Heart right ventricle (tissue), 16 donors: ENCODE measurements at regions of chr4 and their contacts with region 1.

Region 1: GRCh38 chr4:94304365-94304971 is 38.2 kb downstream of the HPGDS start:
- DNase-seq: no peak
- ATAC-seq: peak in 3 of 8 donors; percentile 41 to 59 (median 55)
- H3K4me3 ChIP-seq: no peak overlapping the region
- H3K27ac ChIP-seq: no peak overlapping the region
- H3K4me1 ChIP-seq: peaks cover 0 to 32% (median 6%) of the 10 kb centered on the region in 9 donors
- H3K27me3 ChIP-seq: no peaks in the 10 kb centered on the region
- CTCF ChIP-seq: peak in 8 of 9 donors; percentile 22 to 73 (median 64)

Region 2: DNA sequence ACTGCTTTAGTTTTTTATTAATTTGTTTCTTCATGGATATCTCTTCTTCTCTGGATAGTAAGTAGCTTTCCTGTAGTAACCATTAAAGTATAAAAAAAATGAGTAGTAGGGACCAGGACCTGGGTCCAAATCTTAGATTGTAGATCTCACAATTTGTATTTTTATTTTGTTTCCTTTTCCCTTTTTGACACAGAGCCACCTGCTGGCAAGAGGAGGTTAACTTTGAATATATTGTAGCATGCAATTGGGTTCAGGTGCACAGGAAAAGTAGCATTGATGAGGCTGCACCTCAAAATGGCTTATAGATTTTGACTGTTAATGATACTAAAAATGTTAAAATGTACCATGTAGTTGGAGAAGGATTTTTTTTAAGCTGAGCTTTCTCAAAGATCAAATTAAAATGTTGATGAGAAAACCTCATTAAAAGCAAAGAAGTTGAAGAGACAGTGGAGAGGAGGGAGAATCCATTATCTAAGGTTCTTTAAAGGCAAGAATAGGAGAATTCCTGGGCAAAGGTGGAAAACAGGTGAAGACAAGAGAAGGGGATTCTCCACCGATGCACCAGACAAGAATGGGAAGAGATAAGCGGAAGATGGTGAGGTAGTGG is 86.4 kb after region 1 on chr4:
- intact Hi-C with region 1: loop called in 2 of 10 experiments (anchors 5 to 10 kb)
- DNase-seq: no peak
- ATAC-seq: no peak
- H3K4me3 ChIP-seq: no peak overlapping the region
- H3K27ac ChIP-seq: no peak overlapping the region
- H3K4me1 ChIP-seq: no peaks in the 10 kb centered on the region
- H3K27me3 ChIP-seq: no peaks in the 10 kb centered on the region
- CTCF ChIP-seq: peak in 7 of 9 donors; percentile 43 to 63 (median 55)

Region 3: DNA sequence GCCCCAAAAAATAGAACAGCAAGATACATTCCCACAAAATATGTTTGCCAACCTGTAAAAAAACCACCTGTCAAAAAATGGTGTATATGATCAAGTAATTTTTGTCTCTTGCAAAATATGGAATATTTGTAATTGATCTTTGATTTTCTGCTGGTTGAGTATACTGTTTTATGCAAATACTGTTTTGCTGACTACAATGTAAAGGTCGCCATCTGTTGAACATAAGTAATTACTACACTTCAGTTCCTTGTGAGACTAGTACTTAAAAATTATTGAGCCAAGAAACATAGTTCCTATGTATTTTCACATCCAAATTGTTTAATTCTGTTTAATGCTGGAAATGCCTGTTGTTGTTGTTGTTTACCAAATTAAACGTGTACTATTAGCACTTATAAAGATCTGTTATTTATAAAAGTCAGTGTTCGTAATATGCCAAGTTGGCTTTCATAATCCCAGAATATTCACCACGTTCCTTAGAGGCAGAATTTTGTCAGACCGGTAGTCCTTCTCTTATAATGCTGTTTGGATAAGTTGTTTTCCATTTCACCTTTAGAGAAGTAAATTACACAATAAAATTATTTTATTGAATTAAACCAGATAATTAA is 291.5 kb after region 1 on chr4:
- intact Hi-C with region 1: loop called in 5 of 10 experiments (anchors 10 kb)
- DNase-seq: no peak
- ATAC-seq: peak in 3 of 8 donors; percentile 41 to 57 (median 42)
- H3K4me3 ChIP-seq: no peak overlapping the region
- H3K27ac ChIP-seq: peak overlapping the region in 1 of 10 donors; percentile 30
- H3K4me1 ChIP-seq: peaks cover 0 to 34% (median 19%) of the 10 kb centered on the region in 9 donors
- H3K27me3 ChIP-seq: no peaks in the 10 kb centered on the region
- CTCF ChIP-seq: peak; percentile 40 to 81 (median 64)

Region 4: DNA sequence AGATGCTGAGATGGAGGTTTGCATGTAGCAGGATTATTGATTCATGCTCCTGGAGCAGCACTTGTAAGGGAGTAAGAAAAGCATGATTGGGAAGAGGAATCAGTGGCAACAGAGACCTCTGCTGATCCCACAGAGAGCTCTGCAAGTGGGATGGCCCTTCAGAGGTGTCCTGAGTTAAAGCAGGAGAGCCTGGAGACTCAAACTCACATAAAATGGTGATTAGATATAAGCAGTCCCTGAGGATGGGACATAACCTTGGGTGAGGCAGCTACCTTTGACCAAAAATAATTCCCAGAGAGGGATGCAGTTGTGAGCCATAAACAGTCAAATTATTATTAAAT is 427.9 kb after region 1 on chr4:
- intact Hi-C with region 1: loop called in 1 of 10 experiments (anchors 10 kb)
- DNase-seq: no peak
- ATAC-seq: no peak
- H3K4me3 ChIP-seq: no peak overlapping the region
- H3K27ac ChIP-seq: no peak overlapping the region
- H3K4me1 ChIP-seq: no peaks in the 10 kb centered on the region
- H3K27me3 ChIP-seq: peaks cover 0 to 9% (median 0%) of the 10 kb centered on the region in 7 donors
- CTCF ChIP-seq: no peak